Activated B cell treated with CpG ODN at 0.5 μM for 24 hours (primary cell): ENCODE measurements at regions of chr18 and their contacts with region 1.

Region 1: GRCh38 chr18:51324945-51325344 is 127.5 kb upstream of the MEX3C start:
- DNase-seq: no peak
- ATAC-seq: no peak
- H3K4me3 Mint-ChIP-seq: no peak overlapping the region
- H3K27ac Mint-ChIP-seq: no peak overlapping the region
- H3K4me1 Mint-ChIP-seq: no peaks in the 10 kb centered on the region
- H3K27me3 Mint-ChIP-seq: no peaks in the 10 kb centered on the region
- CTCF ChIP-seq: no peak

Region 2: DNA sequence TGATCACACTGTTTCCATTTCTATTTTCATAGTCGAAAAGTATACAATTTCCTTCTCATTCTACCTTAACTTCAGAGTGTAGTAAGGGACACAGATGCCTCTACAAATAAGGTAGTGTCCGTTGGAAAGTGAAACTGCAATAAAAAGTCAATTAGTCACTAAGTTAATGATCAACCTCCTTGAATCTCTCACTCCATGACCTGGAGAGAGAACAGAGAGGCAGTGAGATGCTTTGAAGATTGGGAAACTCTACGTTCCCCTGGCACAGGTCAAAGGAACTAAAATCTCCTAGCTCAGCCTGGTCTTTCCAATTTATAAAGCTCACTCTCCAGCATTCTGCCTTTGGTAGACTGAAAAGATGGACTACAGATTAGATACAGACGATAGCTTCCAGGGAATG is 1357.8 kb before region 1 on chr18:
- CTCF ChIA-PET with region 1: no interaction called
- POLR2A ChIA-PET with region 1: no interaction called
- intact Hi-C with region 1: loop called (anchors 5 kb)
- DNase-seq: no peak
- ATAC-seq: no peak
- H3K4me3 Mint-ChIP-seq: no peak overlapping the region
- H3K27ac Mint-ChIP-seq: no peak overlapping the region
- H3K4me1 Mint-ChIP-seq: no peaks in the 10 kb centered on the region
- H3K27me3 Mint-ChIP-seq: peaks cover 6% of the 10 kb centered on the region
- CTCF ChIP-seq: no peak

Region 3: GRCh38 chr18:51051105-51051712 is 273.7 kb before region 1 on chr18:
- CTCF ChIA-PET with region 1: no interaction called
- POLR2A ChIA-PET with region 1: no interaction called
- intact Hi-C with region 1: no loop called
- DNase-seq: no peak
- ATAC-seq: peak; percentile 86
- H3K4me3 Mint-ChIP-seq: no peak overlapping the region
- H3K27ac Mint-ChIP-seq: peak overlapping the region; percentile 15
- H3K4me1 Mint-ChIP-seq: peaks cover 20% of the 10 kb centered on the region
- H3K27me3 Mint-ChIP-seq: no peaks in the 10 kb centered on the region
- CTCF ChIP-seq: peak; percentile 70

Region 4: DNA sequence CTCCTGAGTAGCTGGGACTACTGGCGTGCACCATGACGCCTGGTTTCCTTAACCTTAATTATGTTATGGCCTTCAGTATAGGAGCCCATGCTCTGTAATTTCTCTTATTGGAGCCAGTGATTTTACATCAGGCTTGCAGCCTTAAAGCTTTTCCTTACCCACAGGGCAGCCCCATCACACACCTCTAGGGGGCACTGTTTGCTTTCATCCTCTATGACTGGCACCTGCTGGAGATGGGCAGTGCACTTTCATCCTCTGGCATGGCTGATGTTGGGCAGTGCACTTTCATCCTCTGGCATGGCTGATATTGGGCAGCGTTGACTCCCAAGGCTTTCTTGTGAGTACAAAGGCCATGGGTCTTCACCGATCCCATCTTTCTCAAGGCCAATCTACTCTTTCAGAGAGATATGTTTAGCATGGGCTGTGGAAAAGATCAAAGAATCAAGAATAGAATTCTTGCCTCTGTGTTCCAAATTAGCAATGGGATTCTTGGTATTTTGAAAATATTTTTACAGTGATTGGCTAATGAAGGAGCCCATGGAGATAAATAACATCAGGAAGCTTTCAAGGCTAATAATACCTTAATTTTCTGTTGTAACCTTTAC is 46.8 kb before region 1 on chr18:
- CTCF ChIA-PET with region 1: no interaction called
- POLR2A ChIA-PET with region 1: no interaction called
- intact Hi-C with region 1: no loop called
- DNase-seq: no peak
- ATAC-seq: no peak
- H3K4me3 Mint-ChIP-seq: no peak overlapping the region
- H3K27ac Mint-ChIP-seq: no peak overlapping the region
- H3K4me1 Mint-ChIP-seq: peaks cover 9% of the 10 kb centered on the region
- H3K27me3 Mint-ChIP-seq: no peaks in the 10 kb centered on the region
- CTCF ChIP-seq: no peak

Region 5: GRCh38 chr18:51342820-51343219 is 17.9 kb after region 1 on chr18:
- CTCF ChIA-PET with region 1: no interaction called
- POLR2A ChIA-PET with region 1: no interaction called
- intact Hi-C with region 1: no loop called
- DNase-seq: no peak
- ATAC-seq: no peak
- H3K4me3 Mint-ChIP-seq: no peak overlapping the region
- H3K27ac Mint-ChIP-seq: no peak overlapping the region
- H3K4me1 Mint-ChIP-seq: no peaks in the 10 kb centered on the region
- H3K27me3 Mint-ChIP-seq: peaks cover 11% of the 10 kb centered on the region
- CTCF ChIP-seq: no peak

Region 6: DNA sequence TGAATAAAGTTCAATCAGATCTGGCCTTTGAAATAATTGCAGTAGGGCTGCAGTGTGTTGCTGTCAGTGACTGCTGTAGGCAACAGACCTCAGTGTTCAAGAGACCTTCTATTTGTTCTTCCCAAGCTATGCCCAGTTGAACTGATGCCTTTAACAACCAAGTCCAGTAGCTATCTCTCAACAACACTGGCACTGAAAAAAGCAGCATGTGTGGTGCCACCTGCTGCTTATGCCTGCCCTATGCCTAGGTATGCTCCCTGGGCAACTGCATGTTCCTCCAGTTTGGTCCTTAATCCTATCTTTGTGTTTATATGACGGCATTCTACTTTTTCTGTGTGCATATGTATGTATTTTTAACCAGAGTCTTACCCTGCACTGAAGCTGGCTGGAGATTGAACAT is 396.4 kb after region 1 on chr18:
- CTCF ChIA-PET with region 1: no interaction called
- POLR2A ChIA-PET with region 1: no interaction called
- intact Hi-C with region 1: no loop called
- DNase-seq: no peak
- ATAC-seq: no peak
- H3K4me3 Mint-ChIP-seq: no peak overlapping the region
- H3K27ac Mint-ChIP-seq: no peak overlapping the region
- H3K4me1 Mint-ChIP-seq: peaks cover 3% of the 10 kb centered on the region
- H3K27me3 Mint-ChIP-seq: no peaks in the 10 kb centered on the region
- CTCF ChIP-seq: no peak